Calu3 (cell line): ENCODE measurements at regions of chr9 and their contacts with region 1.

Region 1: GRCh38 chr9:21789541-21790037 is 12.8 kb upstream of the MTAP start:
- DNase-seq: no peak
- H3K4me3 Mint-ChIP-seq: peak overlapping the region; percentile 47
- H3K27ac Mint-ChIP-seq: peak overlapping the region; percentile 60
- H3K4me1 Mint-ChIP-seq: peaks cover 32% of the 10 kb centered on the region
- H3K27me3 Mint-ChIP-seq: no peaks in the 10 kb centered on the region
- CTCF ChIP-seq: peak; percentile 68

Region 2: GRCh38 chr9:21239911-21240310 is 549.7 kb before region 1 on chr9 and contains the start of gene IFNA14:
- CTCF ChIA-PET with region 1: interaction called, 5 read pairs
- intact Hi-C with region 1: loop called (anchors 5 kb)
- DNase-seq: no peak
- H3K4me3 Mint-ChIP-seq: no peak within 1 kb of the TSS
- H3K27ac Mint-ChIP-seq: no peak within 1 kb of the TSS
- H3K4me1 Mint-ChIP-seq: peaks cover 8% of the 10 kb centered on the region
- H3K27me3 Mint-ChIP-seq: no peaks in the 10 kb centered on the region
- CTCF ChIP-seq: no peak
- total RNA-seq, gene IFNA14: not detected in 2 replicates

Region 3: DNA sequence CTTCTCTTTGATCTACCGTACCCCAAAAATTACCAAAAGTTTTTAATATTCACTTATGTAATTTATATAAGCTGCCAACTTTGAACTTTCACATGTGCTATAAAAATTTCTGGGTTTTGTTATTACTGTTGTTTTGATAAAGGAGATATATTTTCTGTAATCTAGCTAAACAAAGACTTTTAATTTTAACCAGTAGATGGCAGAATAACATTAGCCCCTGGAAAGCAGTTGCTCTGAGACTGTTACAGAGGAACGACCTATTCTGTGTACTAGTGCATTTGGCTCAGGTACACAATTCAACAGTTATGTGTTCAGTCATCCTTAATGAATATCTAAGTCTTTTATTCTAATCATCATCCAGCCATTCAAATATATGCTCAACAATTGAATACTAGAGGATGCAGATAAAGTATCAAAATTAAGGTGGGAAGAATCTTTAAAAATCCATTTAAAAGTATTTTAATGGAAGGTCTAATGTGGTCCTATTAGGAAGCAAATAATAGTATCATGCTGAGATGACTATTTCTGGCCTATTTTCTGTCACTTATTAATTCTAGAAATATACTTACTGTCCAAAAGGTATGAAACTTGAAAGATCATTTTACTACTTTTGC is 463.0 kb before region 1 on chr9:
- CTCF ChIA-PET with region 1: interaction called, 3 read pairs
- intact Hi-C with region 1: loop called (anchors 5 kb)
- DNase-seq: no peak
- H3K4me3 Mint-ChIP-seq: no peak overlapping the region
- H3K27ac Mint-ChIP-seq: no peak overlapping the region
- H3K4me1 Mint-ChIP-seq: peaks cover 5% of the 10 kb centered on the region
- H3K27me3 Mint-ChIP-seq: no peaks in the 10 kb centered on the region
- CTCF ChIP-seq: no peak

Region 4: GRCh38 chr9:21465859-21466518 is 323.6 kb before region 1 on chr9:
- CTCF ChIA-PET with region 1: interaction called, 3 read pairs
- intact Hi-C with region 1: loop called (anchors 1 kb)
- DNase-seq: peak; percentile 15
- H3K4me3 Mint-ChIP-seq: no peak overlapping the region
- H3K27ac Mint-ChIP-seq: no peak overlapping the region
- H3K4me1 Mint-ChIP-seq: no peaks in the 10 kb centered on the region
- H3K27me3 Mint-ChIP-seq: no peaks in the 10 kb centered on the region
- CTCF ChIP-seq: peak; percentile 39

Region 5: DNA sequence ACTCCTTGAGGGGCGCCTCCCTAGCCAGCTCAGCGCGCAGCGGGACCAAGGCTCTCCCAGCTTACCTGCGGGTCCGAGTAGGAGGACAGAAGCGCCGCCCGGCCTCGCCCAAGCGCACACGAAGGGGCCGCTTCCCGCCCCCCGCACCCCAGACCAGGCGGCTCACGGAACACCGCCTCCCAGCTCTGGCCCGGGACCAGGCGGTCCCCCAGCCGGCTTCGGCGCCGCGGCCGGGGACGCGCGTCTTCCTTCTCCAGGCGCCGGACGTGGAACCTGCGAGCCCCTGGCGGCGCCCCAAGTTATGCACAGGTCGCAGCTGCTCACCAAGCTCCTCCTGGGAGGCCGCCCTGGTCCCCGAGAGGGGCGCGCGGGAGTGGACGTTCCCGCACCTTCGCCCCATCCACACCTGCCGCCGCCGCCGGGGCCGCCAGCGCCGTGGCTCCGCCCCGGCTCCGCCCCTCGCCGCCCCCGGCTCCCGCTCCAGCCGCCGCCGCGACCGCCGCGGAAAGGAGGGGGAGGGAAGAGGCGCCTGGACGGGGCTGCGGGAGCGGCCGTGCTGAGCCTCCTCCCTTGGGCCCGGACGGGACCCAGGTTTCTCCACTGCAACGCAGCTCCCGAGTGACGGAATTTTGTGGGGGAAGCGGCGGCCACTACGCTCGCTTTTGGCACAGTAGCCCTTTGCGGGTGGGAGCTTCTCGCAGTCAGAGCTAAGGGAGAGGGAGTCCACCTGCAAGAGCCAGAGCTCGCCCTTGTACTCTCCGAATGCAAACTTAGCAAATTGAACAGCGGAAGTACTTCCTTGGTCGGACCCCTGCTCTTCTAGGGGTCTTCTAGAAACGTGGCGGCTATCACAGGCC is 229.9 kb before region 1 on chr9:
- CTCF ChIA-PET with region 1: interaction called, 6 read pairs
- intact Hi-C with region 1: loop called (anchors 5 kb)
- DNase-seq: peak; percentile 88
- H3K4me3 Mint-ChIP-seq: peak overlapping the region; percentile 85
- H3K27ac Mint-ChIP-seq: peak overlapping the region; percentile 98
- H3K4me1 Mint-ChIP-seq: peaks cover 10% of the 10 kb centered on the region
- H3K27me3 Mint-ChIP-seq: no peaks in the 10 kb centered on the region
- CTCF ChIP-seq: no peak

Region 6: DNA sequence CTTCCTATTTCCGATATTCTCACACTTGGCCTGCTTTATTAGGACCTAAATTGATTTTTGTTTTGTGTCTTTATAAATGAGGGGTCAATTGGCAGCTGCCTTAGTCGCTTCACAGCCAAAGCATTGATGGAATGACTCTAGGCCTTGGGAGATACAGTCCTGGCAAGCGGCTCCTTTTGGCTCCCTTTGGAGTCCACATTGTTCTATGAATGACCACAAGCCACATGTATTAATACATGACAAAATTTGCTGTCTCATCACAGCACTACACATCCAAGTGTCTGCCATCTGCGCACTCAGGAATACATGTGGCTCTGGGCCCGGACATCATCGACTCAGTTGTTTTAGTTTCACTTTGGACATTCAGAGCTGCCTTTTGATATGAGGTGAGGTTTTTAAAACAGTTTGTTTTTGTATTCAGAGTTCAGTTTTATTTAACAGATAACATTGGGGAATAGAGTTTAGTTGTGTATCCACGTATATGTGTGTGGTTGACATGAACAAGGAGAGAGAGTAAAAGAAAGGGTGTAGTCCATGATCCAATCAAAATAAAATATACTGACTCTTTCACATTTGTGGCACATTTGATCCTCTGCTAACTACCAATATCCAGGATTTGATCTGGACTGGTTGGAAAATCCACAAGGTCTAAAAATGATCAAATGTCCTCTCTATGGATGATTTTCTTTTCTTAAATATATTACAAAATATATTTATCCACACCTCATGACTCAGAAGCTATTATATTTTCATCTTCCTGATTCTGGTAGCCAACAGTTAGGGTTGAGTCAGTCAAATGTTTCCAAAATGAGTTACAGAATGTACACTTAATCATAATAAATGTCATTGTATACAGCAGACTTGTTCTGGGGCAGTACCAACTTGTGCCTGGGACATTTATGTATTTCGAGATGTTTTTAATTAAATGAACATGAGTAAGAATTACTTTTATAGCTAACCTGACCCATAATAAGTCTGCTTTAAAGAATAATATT is 101.2 kb before region 1 on chr9:
- CTCF ChIA-PET with region 1: interaction called, 3 read pairs
- intact Hi-C with region 1: loop called (anchors 2 kb)
- DNase-seq: peak; percentile 38
- H3K4me3 Mint-ChIP-seq: peak overlapping the region; percentile 65
- H3K27ac Mint-ChIP-seq: peak overlapping the region; percentile 90
- H3K4me1 Mint-ChIP-seq: peaks cover 63% of the 10 kb centered on the region
- H3K27me3 Mint-ChIP-seq: no peaks in the 10 kb centered on the region
- CTCF ChIP-seq: no peak

Region 7: DNA sequence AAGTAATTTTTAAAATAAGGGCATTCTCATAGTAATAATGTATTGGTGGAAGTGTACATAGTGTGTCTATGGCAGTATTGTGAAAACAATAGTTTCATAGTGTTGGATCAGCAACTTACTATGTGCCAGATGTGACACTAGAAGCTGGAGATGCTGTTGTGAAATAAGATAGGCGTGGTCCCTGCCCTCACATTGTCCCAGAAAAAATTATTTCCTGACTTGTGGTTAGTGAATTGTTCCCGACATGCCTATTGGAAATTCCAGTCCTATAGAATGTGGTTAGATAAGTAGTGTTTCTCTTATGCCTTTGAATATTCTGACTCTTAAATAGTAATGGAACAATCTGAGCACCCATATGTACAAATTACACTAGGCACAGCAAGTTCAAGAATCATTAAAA is 42.4 kb before region 1 on chr9:
- CTCF ChIA-PET with region 1: no interaction called
- intact Hi-C with region 1: no loop called
- DNase-seq: no peak
- H3K4me3 Mint-ChIP-seq: no peak overlapping the region
- H3K27ac Mint-ChIP-seq: no peak overlapping the region
- H3K4me1 Mint-ChIP-seq: peaks cover 23% of the 10 kb centered on the region
- H3K27me3 Mint-ChIP-seq: no peaks in the 10 kb centered on the region
- CTCF ChIP-seq: no peak

Region 8: GRCh38 chr9:21812946-21813568 is 23.5 kb after region 1 on chr9:
- CTCF ChIA-PET with region 1: no interaction called
- intact Hi-C with region 1: no loop called
- DNase-seq: peak; percentile 77
- H3K4me3 Mint-ChIP-seq: no peak overlapping the region
- H3K27ac Mint-ChIP-seq: peak overlapping the region; percentile 23
- H3K4me1 Mint-ChIP-seq: peaks cover 41% of the 10 kb centered on the region
- H3K27me3 Mint-ChIP-seq: no peaks in the 10 kb centered on the region
- CTCF ChIP-seq: peak; percentile 72